GM10248 (cell line): ENCODE measurements at regions of chrX and their contacts with region 1.

Region 1: DNA sequence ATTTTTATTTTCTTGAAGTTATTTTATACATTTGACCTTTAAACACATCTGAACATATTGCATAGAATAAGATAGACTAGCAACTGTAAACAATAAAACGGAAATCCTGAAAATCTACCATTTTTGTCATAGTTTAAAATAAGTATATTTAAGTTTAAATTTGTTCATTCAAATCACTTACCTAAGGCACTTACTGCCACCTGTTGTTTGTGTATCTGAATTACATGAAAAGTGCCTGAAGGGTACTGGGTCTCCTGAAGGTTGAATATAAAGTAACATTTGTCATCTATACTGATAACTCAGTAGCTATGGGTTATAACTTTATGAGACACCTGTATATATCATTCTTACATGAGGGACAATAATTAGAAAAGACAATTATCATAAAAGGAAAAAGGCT is 38.6 kb downstream of the TRPC5 start:
- DNase-seq: no peak
- CTCF ChIP-seq: peak; percentile 8

Region 2: DNA sequence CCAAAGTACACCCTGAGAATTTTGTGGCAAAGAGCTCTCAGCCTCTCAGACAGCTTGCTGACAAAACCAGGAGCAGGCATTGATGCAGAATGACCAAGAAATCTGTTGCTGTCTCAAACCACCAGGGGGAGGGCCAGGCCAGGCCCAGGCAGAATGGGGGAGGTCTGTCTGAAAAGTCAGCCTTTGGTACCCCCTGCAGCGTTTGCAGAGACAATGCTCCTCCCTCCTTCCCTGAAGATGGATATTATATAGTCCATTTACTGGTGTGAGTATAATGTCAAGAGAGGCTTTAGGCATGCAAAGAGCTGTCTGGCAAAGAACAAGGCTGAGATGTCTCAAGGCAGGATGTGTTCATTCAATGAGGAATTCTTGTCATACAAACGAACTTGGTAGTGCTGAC is 220.9 kb before region 1 on chrX:
- CTCF ChIA-PET with region 1: interaction called, 14 read pairs
- POLR2A ChIA-PET with region 1: no interaction called
- DNase-seq: peak; percentile 18
- CTCF ChIP-seq: no peak